IMR-90 (cell line): ENCODE measurements at regions of chr3 and their contacts with region 1.

Region 1: GRCh38 chr3:124859025-124859424 is 28.1 kb downstream of the ITGB5 start:
- DNase-seq: peak; percentile 95
- ATAC-seq: peak; percentile 74
- H3K4me3 ChIP-seq: no peak overlapping the region
- H3K27ac ChIP-seq: peak overlapping the region; percentile 69
- H3K4me1 ChIP-seq: peaks cover 11% of the 10 kb centered on the region
- H3K27me3 ChIP-seq: no peaks in the 10 kb centered on the region
- CTCF ChIP-seq: no peak
- POLR2A ChIP-seq: no peak
- RAD21 ChIP-seq: peak; percentile 32

Region 2: GRCh38 chr3:124834723-124835718 is 24.0 kb before region 1 on chr3:
- CTCF ChIA-PET with region 1: no interaction called
- POLR2A ChIA-PET with region 1: no interaction called
- dilution Hi-C with region 1: no loop called
- in situ Hi-C with region 1: no loop called
- intact Hi-C with region 1: loop called (anchors 2 kb)
- DNase-seq: peak; percentile 98
- ATAC-seq: peak; percentile 56
- H3K4me3 ChIP-seq: no peak overlapping the region
- H3K27ac ChIP-seq: peak overlapping the region; percentile 38
- H3K4me1 ChIP-seq: peaks cover 34% of the 10 kb centered on the region
- H3K27me3 ChIP-seq: no peaks in the 10 kb centered on the region
- CTCF ChIP-seq: no peak
- POLR2A ChIP-seq: no peak; the same call in 1 of the 2 replicates
- RAD21 ChIP-seq: no peak; the same call in 1 of the 2 replicates

Region 3: GRCh38 chr3:124878561-124879336 is 19.7 kb after region 1 on chr3:
- CTCF ChIA-PET with region 1: interaction called, 4 read pairs
- POLR2A ChIA-PET with region 1: no interaction called
- dilution Hi-C with region 1: no loop called
- in situ Hi-C with region 1: no loop called
- intact Hi-C with region 1: loop called (anchors 2 kb)
- DNase-seq: peak; percentile 95
- ATAC-seq: peak; percentile 91
- H3K4me3 ChIP-seq: no peak overlapping the region
- H3K27ac ChIP-seq: peak overlapping the region; percentile 34
- H3K4me1 ChIP-seq: peaks cover 22% of the 10 kb centered on the region
- H3K27me3 ChIP-seq: no peaks in the 10 kb centered on the region
- CTCF ChIP-seq: no peak
- POLR2A ChIP-seq: no peak
- RAD21 ChIP-seq: no peak